Thyroid gland (tissue), 4 donors: ENCODE measurements at regions of chr5 and their contacts with region 1.

Region 1: GRCh38 chr5:923281-923873 is 30.7 kb downstream of the TRIP13 start:
- DNase-seq: peak; percentile 79
- H3K4me3 ChIP-seq: no peak overlapping the region
- H3K27ac ChIP-seq: no peak overlapping the region
- H3K4me1 ChIP-seq: peaks cover 10 to 11% of the 10 kb centered on the region in 2 donors
- H3K27me3 ChIP-seq: peaks cover 3% of the 10 kb centered on the region
- CTCF ChIP-seq: peak; percentile 51 to 88 (median 70)
- POLR2A ChIP-seq: no peak

Region 2: DNA sequence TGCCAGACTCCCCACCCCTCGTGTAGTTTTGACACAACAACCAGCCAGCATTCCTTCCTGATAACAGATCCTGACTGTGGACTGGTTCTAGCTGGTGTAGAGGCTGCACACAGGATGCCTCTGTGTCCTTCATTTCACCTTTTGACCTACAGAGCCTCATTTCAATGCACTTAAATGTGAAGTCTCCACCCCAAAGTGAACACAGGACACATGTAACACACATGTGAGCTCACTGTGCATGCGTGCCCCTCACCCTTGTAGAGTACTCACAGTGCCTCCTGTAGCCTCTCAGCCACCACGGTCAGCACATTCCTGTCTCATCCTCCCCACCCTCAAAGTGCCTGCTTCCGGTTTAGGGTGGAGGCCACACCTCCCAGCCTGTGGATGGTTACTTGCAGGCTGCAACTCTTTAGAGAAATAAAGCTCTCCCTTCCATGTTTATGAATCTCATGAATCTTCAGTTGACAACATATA is 73.7 kb after region 1 on chr5:
- intact Hi-C with region 1: no loop called
- DNase-seq: no peak
- H3K4me3 ChIP-seq: no peak overlapping the region
- H3K27ac ChIP-seq: no peak overlapping the region
- H3K4me1 ChIP-seq: peaks cover 0 to 9% of the 10 kb centered on the region in 2 donors
- H3K27me3 ChIP-seq: no peaks in the 10 kb centered on the region
- CTCF ChIP-seq: no peak
- POLR2A ChIP-seq: no peak

Region 3: DNA sequence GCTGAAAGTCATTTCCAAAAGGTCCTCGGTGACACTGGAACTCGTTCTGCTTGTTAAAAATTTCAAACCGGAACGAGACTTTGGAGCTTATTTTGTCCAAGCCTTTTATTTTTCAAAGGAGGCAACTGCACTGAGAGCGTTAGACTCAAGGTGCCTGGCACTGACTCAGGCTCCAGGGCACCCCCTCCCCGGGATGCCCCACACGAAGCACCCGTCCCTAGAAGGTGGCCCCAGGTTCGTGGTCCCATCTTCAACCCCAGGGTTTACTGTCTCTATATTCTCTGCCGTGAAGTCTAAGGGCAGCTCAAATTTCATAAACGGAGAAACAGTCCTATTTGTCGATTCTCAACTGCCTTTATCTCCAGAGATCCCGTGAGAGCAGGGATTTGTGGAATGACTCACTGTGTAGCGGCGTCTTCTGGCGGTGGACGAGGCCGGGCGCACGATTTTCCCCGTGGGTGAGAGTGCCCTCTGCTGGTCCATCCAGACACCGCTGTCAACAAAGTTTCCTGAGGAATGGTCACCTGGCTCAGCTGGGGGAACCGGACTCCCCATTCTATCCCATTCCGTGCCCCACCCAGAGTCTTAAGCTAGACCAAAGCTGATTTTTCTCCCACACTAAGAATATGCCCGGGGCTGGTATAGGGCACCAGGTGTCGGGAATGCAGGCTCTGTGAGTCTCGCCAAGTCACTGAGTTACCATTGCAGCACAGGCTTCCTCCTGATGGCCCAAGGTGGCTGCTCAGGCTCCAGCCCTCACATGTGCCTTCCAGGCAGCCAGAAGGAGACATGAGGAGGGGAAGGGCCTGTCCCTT is 251.0 kb after region 1 on chr5:
- intact Hi-C with region 1: loop called (anchors 5 kb)
- DNase-seq: peak; percentile 63 to 74
- H3K4me3 ChIP-seq: no peak overlapping the region
- H3K27ac ChIP-seq: no peak overlapping the region
- H3K4me1 ChIP-seq: peaks cover under 1 to 8% of the 10 kb centered on the region in 2 donors
- H3K27me3 ChIP-seq: no peaks in the 10 kb centered on the region
- CTCF ChIP-seq: peak; percentile 47 to 82 (median 76)
- POLR2A ChIP-seq: no peak